ENCODE measurements at regions of chr5 and their contacts with region 1.

Region 1: DNA sequence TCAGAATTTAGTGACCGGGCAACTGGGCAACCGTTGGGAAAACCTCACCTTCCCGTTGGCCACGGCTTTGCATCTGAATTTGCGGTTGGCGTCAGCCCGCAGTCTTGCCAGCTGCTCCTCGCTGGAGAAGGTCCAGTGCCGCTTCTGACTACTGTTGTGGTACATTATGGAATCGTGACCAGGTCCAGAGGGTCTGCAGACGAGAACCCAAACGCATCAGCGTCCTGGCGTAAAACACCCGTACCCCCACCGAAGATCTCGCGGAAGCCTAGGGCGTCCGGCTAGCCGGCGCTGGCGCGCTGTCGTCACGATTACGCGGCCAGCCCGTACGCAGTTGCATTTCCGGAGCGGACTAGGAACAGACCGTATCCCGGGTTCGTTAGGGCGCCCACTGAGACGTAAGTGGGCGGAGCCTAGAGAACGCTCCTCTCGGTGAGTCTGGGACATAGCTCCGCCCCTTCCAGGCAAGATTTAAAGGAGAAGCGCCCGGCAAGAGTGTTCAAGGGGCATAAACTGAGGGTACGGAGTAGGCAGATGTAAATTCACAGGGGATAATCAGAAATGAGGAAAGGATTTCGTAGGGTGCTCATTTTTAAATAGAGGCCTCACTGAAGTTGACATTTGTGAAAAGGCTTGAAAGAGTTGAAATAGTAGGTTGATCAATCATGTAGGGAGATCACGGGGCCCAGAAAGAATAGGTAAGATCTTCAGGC is at the start of gene CCNH:
- DNase-seq: peak; percentile 97 to 99 (median 97)
- H3K4me3 ChIP-seq: peak within 1 kb of the TSS; percentile 70 to 99 (median 95)
- H3K4me3 Mint-ChIP-seq: peak within 1 kb of the TSS; percentile 95 to 96
- H3K27ac ChIP-seq: peak within 1 kb of the TSS; percentile 88 to 100
- H3K27ac Mint-ChIP-seq: peak within 1 kb of the TSS; percentile 95 to 100 (median 99)
- H3K4me1 ChIP-seq: peaks cover 13 to 23% of the 10 kb centered on the region in 2 donors
- H3K4me1 Mint-ChIP-seq: peaks cover 23% of the 10 kb centered on the region
- H3K27me3 ChIP-seq: no peaks in the 10 kb centered on the region
- H3K27me3 Mint-ChIP-seq: peaks cover 0 to 1% (median 1%) of the 10 kb centered on the region in 3 donors
- CTCF ChIP-seq: no peak
- polyA plus RNA-seq, gene CCNH: 60.3 to 64.0 (median 62.1) TPM

Region 2: DNA sequence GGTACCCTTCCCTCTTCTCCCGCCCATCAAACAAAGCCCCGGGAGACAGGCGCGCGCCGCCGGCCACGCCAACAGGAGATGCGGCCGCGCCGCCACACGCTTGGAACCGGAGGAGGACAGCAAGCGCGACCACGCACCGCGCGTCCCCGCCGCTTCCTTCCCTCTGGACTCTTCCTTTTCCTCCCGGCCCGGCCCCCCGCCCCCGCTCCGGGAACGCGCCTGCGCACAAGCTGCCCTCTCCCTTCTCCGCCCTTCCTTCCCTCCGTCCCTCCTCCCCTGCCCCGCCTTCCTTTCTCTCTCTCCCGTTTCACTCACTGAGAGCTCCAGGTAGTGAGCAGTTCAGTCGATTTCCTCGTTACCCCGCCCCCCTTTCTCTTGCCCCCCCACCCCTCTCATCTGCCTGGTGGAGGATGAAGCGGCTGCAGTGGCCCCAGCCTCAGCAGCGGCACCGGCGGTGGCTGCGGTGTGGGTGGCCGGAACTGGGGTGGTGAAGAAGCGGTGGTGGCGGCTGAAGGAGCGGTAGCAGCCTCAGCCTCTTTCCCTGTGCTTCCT is 145.1 kb before region 1 on chr5 and contains the start of gene RASA1:
- intact Hi-C with region 1: loop called (anchors 10 kb)
- DNase-seq: peak; percentile 82 to 89 (median 85)
- H3K4me3 ChIP-seq: peak within 1 kb of the TSS; percentile 46 to 88 (median 80)
- H3K4me3 Mint-ChIP-seq: peak within 1 kb of the TSS; percentile 97 to 100
- H3K27ac ChIP-seq: peak within 1 kb of the TSS; percentile 78 to 85
- H3K27ac Mint-ChIP-seq: peak within 1 kb of the TSS; percentile 87 to 98 (median 95)
- H3K4me1 ChIP-seq: peaks cover 14 to 37% of the 10 kb centered on the region in 2 donors
- H3K4me1 Mint-ChIP-seq: peaks cover 36% of the 10 kb centered on the region
- H3K27me3 ChIP-seq: no peaks in the 10 kb centered on the region
- H3K27me3 Mint-ChIP-seq: peaks cover 0 to 1% (median 0%) of the 10 kb centered on the region in 3 donors
- CTCF ChIP-seq: no peak
- polyA plus RNA-seq, gene RASA1: 2.1 to 20.1 (median 4.0) TPM